ENCODE measurements at regions of chr14 and their contacts with region 1.

Region 1: DNA sequence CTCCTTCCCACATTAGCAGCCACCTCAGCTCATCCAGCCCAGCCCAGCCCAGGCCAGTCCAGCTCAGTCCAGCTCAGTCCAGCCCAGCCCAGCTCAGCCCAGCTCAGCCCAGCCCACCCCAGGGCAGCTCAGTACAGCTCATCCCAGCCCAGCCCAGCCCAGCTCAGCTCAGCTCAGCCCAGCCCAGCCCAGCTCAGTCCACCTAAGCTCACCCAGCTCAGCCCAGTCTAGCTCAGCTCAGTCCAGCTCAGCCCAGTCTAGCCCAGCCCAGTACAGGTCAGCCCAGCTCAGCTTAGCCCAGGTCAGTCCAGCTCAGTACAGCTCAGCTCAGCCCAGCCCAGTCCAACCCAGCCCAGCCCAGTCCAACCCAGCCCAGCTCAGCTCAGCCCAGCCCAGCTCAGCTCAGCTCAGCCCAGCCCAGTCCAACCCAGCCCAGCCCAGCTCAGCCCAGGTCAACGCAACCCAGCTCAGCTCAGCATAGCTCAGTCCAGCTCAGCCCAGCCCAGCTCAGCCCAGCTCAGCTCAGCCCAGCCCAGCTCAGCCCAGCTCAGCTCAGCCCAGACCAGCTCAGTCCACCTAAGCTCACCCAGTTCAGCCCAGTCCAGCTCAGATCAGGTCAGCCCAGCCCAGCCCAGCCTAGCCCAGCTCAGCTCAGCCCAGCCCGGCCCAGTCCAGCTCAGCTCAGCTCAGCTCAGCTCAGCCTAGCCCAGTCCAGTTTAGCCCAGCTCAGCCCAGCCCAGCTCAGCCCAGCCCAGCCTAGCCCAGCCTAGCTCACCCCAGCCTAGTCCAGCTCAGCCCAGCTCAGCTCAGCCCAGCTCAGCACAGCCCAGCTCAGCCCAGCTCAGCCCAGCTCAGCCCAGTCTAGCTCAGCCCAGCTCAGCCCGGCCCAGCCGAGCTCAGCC is 63.0 kb downstream of the TMEM121 start:
- DNase-seq: peak in 1 of 3 donors; percentile 52
- ATAC-seq: no peak
- H3K4me3 ChIP-seq: no peak overlapping the region
- H3K4me1 ChIP-seq: no peaks in the 10 kb centered on the region
- CTCF ChIP-seq: no peak

Region 2: GRCh38 chr14:105430535-105430934 is 158.9 kb before region 1 on chr14:
- intact Hi-C with region 1: no loop called
- DNase-seq: no peak
- ATAC-seq: no peak
- H3K4me3 ChIP-seq: no peak overlapping the region
- H3K4me1 ChIP-seq: no peaks in the 10 kb centered on the region
- CTCF ChIP-seq: no peak

Region 3: DNA sequence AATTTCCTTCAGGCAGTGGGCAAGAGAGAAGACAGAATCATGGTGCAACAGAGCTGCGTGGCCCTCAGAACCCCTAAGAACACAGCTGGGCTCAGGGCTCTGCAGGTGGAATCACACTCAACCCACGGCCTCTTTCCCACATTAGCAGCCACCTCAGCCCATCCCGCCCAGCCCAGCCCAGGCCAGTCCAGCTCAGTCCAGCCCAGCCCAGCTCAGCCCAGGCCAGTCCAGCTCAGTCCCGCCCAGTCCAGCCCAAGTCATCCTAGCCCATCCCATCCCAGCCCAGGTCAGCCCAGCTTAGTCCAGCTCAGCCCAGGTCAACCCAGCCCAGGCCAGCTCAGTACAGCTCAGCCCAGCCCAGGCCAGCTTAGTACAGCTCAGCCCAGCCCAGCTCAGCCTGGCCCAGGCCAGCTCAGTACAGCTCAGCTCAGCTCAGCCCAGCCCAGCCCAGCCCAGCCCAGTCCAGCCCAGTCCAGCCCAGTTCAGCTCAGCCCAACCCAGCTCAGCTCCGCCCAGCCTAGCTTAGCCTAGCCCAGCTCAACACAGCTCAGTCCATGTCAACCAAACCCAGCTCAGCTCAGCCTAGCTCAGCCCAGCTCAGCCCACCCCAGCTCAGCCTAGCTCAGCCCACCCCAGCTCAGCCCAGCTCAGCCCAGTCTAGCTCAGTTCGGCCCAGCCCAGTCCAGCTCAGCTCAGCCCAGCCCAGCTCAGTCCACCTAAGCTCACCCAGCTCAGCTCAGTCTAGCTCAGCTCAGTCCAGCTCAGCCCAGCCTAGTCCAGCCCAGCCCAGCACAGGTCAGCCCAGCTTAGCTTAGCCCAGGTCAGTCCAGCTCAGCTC is 120.1 kb after region 1 on chr14:
- intact Hi-C with region 1: loop called (anchors 5 to 10 kb)
- DNase-seq: no peak
- ATAC-seq: peak; percentile 3
- H3K4me3 ChIP-seq: no peak overlapping the region
- H3K4me1 ChIP-seq: no peaks in the 10 kb centered on the region
- CTCF ChIP-seq: no peak